Body of pancreas (tissue), 4 donors: ENCODE measurements at regions of chr9 and their contacts with region 1.

Region 1: DNA sequence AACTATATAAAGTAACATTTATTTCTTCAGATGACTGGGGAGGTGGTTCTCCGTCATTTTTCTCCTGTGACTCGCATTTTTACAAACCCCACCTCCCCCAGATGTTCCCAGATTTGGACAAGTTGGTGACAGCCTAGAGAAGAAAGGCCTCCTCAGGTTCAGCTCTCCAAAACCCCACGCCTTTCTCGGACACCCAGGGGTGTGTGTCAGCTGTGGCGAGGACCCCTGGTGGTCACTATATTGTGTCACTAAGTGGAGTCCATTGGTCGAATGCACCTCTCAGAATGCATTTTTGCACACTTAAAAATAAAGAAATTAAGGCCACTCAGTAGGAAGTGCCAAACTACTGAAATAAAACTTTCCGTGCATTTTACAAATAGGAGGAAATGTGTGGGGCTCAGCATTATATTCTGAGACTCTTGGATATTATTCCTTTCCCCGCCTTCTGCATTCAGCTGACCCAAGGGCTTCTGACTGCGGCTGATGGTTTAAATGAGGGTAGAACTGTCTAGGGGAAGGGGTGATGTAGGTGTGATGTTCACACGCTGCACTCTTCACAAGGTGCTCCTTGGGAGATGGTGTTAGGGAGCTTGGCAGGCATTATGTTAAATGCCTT is 47.6 kb downstream of the ACO1 start:
- DNase-seq: peak; percentile 43 to 71 (median 51)
- ATAC-seq: no peak
- H3K4me3 ChIP-seq: no peak overlapping the region
- H3K27ac ChIP-seq: no peak overlapping the region
- H3K4me1 ChIP-seq: peaks cover 6% of the 10 kb centered on the region
- H3K27me3 ChIP-seq: no peaks in the 10 kb centered on the region
- CTCF ChIP-seq: peak in 6 of 7 experiments; percentile 25 to 58 (median 45)
- POLR2A ChIP-seq: no peak

Region 2: DNA sequence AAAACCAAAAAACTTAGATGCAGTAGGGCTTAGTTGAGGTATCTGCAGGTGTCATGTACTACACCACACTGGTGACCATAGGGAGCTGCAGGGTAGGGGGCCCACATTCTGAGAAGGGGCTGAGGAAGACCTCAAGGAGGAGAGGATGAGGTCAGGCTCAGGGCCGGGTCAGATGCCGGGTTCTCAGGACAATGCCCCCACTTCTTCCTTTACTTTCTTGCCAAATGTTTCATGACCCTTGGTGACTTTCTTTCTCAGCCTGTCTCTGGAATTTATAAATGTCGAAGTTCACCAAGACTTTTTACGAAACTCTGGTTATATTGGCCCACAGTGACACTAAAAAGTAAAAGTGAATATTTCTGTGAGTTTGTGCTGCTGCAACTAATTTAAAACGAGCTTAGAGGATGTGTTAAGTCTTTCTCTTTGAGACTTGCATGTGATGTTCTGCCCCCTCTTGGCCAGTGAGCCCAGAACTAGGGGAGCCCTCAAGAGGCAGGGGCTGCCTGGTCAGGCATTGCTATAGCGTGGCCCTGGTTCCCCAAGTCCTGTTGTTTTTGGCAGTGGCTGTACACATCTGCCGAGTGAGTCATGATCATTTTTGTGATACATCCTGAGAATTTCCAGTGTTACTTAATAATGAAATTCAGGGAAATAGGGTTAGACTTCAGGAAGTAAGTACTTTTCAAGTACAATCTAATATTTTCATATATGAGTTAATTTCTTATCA is 36.4 kb before region 1 on chr9:
- intact Hi-C with region 1: no loop called
- DNase-seq: peak in 3 of 4 donors; percentile 30 to 47 (median 41)
- ATAC-seq: peak; percentile 47
- H3K4me3 ChIP-seq: no peak overlapping the region
- H3K27ac ChIP-seq: peak overlapping the region; percentile 21 to 56 (median 32)
- H3K4me1 ChIP-seq: peaks cover 29% of the 10 kb centered on the region
- H3K27me3 ChIP-seq: no peaks in the 10 kb centered on the region
- CTCF ChIP-seq: no peak
- POLR2A ChIP-seq: no peak

Region 3: DNA sequence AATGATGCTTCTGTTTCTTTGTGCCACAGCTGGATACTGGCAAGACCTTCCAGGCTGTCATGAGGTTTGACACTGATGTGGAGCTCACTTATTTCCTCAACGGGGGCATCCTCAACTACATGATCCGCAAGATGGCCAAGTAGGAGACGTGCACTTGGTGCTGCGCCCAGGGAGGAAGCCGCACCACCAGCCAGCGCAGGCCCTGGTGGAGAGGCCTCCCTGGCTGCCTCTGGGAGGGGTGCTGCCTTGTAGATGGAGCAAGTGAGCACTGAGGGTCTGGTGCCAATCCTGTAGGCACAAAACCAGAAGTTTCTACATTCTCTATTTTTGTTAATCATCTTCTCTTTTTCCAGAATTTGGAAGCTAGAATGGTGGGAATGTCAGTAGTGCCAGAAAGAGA is 17.9 kb after region 1 on chr9:
- intact Hi-C with region 1: loop called (anchors 2 kb)
- DNase-seq: no peak
- ATAC-seq: no peak
- H3K4me3 ChIP-seq: no peak overlapping the region
- H3K27ac ChIP-seq: no peak overlapping the region
- H3K4me1 ChIP-seq: no peaks in the 10 kb centered on the region
- H3K27me3 ChIP-seq: no peaks in the 10 kb centered on the region
- CTCF ChIP-seq: no peak
- POLR2A ChIP-seq: no peak

Region 4: DNA sequence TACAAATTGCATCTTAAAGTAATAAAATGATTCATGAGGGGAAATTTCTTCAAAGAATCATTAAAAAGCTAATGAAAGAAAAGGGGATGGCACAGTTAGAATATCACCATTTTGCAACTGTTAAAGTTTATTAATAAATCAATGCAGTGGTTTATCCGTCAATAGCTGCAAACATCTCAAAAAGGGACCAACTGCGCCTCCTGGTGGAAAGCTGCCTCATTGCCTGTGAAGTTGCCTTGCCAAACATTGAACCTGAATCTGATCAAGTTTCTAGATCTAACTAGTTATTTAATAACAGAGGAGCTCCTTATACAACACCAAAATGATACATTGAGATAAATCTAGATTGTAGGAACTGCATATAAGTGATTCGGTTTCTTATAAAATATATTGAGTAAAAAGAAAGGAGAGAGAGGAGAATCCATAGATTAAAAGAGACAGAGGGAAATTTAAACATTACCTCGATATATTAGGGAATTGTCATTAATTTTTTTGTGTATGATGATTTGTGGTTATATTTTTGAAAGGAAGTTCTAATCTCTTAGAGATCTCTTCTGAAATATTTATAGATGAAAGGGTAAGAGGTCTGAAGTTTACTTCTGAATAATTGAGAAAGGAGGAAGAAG is 147.8 kb after region 1 on chr9:
- intact Hi-C with region 1: loop called (anchors 10 kb)
- DNase-seq: peak; percentile 67 to 82 (median 74)
- ATAC-seq: peak; percentile 58
- H3K4me3 ChIP-seq: no peak overlapping the region
- H3K27ac ChIP-seq: no peak overlapping the region
- H3K4me1 ChIP-seq: no peaks in the 10 kb centered on the region
- H3K27me3 ChIP-seq: no peaks in the 10 kb centered on the region
- CTCF ChIP-seq: peak; percentile 73 to 92 (median 78)
- POLR2A ChIP-seq: no peak